GM23248 (cell line): ENCODE measurements at regions of chr10 and their contacts with region 1.

Region 1: GRCh38 chr10:101782811-101783735 is at the start of gene NPM3:
- DNase-seq: peak; percentile 95
- H3K4me3 ChIP-seq: peak within 1 kb of the TSS; percentile 91
- H3K27ac ChIP-seq: peak within 1 kb of the TSS; percentile 34
- H3K4me1 ChIP-seq: peaks cover 8% of the 10 kb centered on the region; the same call in 1 of the 2 replicates
- H3K27me3 ChIP-seq: no peaks in the 10 kb centered on the region
- total RNA-seq, gene NPM3: 62.0 and 69.6 TPM in 2 replicates

Region 2: GRCh38 chr10:100238429-100238828 is 1544.6 kb before region 1 on chr10:
- in situ Hi-C with region 1: no loop called
- DNase-seq: no peak
- H3K4me3 ChIP-seq: no peak overlapping the region
- H3K27ac ChIP-seq: no peak overlapping the region
- H3K4me1 ChIP-seq: no peaks in the 10 kb centered on the region
- H3K27me3 ChIP-seq: no peaks in the 10 kb centered on the region

Region 3: GRCh38 chr10:101602761-101603398 is 180.2 kb before region 1 on chr10:
- in situ Hi-C with region 1: loop called (anchors 10 kb)
- DNase-seq: peak; percentile 81
- H3K4me3 ChIP-seq: no peak overlapping the region
- H3K27ac ChIP-seq: no peak overlapping the region
- H3K4me1 ChIP-seq: no peaks in the 10 kb centered on the region
- H3K27me3 ChIP-seq: no peaks in the 10 kb centered on the region

Region 4: DNA sequence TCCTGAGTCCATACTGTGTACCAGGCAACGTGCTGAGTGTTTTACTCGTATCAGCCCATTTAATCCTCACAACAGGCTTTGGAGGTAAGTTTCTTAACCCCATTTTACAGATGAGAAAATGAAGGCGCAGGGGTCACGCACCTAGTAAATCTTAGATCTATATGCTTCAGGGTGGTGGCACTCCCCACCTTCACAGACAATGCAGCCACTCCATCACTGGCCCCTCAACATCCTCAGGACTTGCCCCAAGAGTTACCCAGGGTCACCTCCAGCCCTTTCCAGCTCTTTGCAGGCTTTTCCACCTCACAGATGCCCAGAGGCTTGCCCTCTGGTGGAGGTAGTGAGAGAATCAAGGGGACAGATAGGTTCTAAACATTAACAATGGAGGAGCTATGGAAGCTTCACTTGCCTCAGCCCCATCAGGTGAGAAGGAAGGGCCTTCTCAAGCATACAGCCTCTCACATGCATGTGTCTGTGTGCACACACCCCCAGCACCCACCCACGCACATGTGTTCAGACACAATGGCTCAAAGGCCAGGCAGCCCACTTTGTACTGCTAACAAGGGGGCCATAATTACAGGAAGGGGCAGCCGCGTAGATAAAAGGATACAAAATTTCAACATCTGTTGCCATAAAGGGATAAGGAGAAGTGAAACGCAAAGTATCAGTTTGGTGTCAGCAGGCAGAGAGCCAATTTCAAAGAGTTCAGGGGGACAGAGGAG is 165.8 kb before region 1 on chr10:
- in situ Hi-C with region 1: no loop called
- DNase-seq: no peak
- H3K4me3 ChIP-seq: no peak overlapping the region
- H3K27ac ChIP-seq: no peak overlapping the region
- H3K4me1 ChIP-seq: no peaks in the 10 kb centered on the region
- H3K27me3 ChIP-seq: no peaks in the 10 kb centered on the region

Region 5: GRCh38 chr10:102633292-102633691 is 850.2 kb after region 1 on chr10:
- in situ Hi-C with region 1: no loop called
- DNase-seq: peak; percentile 77
- H3K4me3 ChIP-seq: peak overlapping the region; percentile 58
- H3K27ac ChIP-seq: peak overlapping the region; percentile 92
- H3K4me1 ChIP-seq: peaks cover 71% of the 10 kb centered on the region
- H3K27me3 ChIP-seq: no peaks in the 10 kb centered on the region